Endothelial cell of umbilical vein (primary cell): ENCODE measurements at regions of chr19 and their contacts with region 1.

Region 1: DNA sequence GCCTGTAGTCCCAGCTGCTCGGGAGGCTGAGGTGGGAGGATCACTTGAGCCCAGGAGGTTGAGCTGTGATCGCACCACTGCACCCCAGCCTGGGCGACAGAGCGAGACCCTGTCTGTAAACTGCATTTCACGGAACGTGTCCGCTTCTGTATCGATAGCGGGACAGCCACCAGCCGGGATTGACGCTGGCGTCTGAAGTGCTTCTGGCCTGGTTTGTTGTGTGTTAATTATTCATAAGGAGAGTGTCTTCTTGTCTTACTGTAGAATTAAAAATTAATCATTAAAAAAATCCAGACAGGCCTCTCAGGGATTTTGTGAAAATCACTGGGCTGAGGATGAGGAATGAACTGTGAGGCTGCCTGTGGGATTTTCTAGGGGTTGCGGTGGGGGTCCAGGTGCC is 16.2 kb upstream of the MISP start:
- DNase-seq: no peak
- H3K4me3 ChIP-seq: no peak overlapping the region
- H3K27ac ChIP-seq: no peak overlapping the region
- H3K4me1 ChIP-seq: no peaks in the 10 kb centered on the region
- H3K27me3 ChIP-seq: no peaks in the 10 kb centered on the region
- CTCF ChIP-seq: no peak
- POLR2A ChIP-seq: no peak

Region 2: GRCh38 chr19:548841-549830 is 185.6 kb before region 1 on chr19:
- CTCF ChIA-PET with region 1: interaction called, 3 read pairs
- POLR2A ChIA-PET with region 1: no interaction called
- dilution Hi-C with region 1: no loop called
- intact Hi-C with region 1: loop called (anchors 1 kb)
- DNase-seq: no peak
- H3K4me3 ChIP-seq: no peak overlapping the region
- H3K27ac ChIP-seq: no peak overlapping the region
- H3K4me1 ChIP-seq: no peaks in the 10 kb centered on the region
- H3K27me3 ChIP-seq: no peaks in the 10 kb centered on the region
- CTCF ChIP-seq: no peak
- POLR2A ChIP-seq: no peak

Region 3: GRCh38 chr19:610801-611505 is 123.8 kb before region 1 on chr19:
- CTCF ChIA-PET with region 1: no interaction called
- POLR2A ChIA-PET with region 1: no interaction called
- dilution Hi-C with region 1: no loop called
- intact Hi-C with region 1: no loop called
- DNase-seq: no peak
- H3K4me3 ChIP-seq: no peak overlapping the region
- H3K27ac ChIP-seq: no peak overlapping the region
- H3K4me1 ChIP-seq: peaks cover 8% of the 10 kb centered on the region
- H3K27me3 ChIP-seq: no peaks in the 10 kb centered on the region
- CTCF ChIP-seq: no peak
- POLR2A ChIP-seq: no peak

Region 4: GRCh38 chr19:623974-624373 is 110.7 kb before region 1 on chr19:
- CTCF ChIA-PET with region 1: no interaction called
- POLR2A ChIA-PET with region 1: no interaction called
- dilution Hi-C with region 1: no loop called
- intact Hi-C with region 1: no loop called
- DNase-seq: no peak
- H3K4me3 ChIP-seq: no peak overlapping the region
- H3K27ac ChIP-seq: no peak overlapping the region
- H3K4me1 ChIP-seq: no peaks in the 10 kb centered on the region
- H3K27me3 ChIP-seq: no peaks in the 10 kb centered on the region
- CTCF ChIP-seq: no peak
- POLR2A ChIP-seq: no peak

Region 5: DNA sequence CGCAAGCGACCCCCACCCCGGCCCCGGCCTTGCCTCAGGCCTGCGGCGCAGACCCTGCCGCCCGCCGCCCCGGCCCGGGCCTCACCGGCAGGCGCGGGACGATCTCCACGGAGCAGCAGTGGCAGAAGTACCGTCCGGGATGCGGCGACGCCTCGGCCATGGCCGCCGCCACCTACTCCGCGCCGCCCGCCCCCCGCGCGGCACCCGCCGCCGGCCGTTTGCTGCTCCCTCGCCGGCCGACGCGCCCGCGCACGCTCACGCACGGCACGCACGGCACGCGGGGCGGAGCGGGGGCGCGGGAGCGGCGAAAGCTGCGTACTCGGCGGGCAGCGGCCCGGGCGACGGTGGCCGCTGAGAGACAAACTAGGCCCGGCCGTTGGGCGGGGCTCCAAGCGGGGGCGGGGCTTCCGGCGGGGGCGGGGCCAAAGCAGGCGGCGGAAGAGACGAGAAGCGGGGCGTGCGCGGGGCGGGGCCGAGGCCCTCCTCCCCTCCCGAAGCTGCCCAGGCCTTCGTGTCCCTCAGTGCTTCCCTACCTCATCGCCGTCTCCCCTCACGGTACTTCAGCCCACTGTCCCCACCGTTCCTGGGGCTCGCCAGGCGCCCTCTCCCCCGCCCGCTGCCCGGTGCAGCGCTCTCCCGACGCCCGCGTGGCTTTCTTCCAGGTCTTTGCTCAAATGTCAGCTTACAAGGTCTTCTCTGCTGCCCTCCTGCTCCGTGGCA is 71.6 kb before region 1 on chr19 and contains the start of gene RNF126:
- CTCF ChIA-PET with region 1: interaction called, 67 read pairs
- POLR2A ChIA-PET with region 1: interaction called, 4 read pairs
- dilution Hi-C with region 1: no loop called
- intact Hi-C with region 1: loop called (anchors 1 kb)
- DNase-seq: peak; percentile 89
- H3K4me3 ChIP-seq: peak within 1 kb of the TSS; percentile 73 to 89 (median 86)
- H3K27ac ChIP-seq: peak within 1 kb of the TSS; percentile 60
- H3K4me1 ChIP-seq: peaks cover 19% of the 10 kb centered on the region
- H3K27me3 ChIP-seq: no peaks in the 10 kb centered on the region
- CTCF ChIP-seq: no peak
- POLR2A ChIP-seq: peak; percentile 88
- total RNA-seq, gene RNF126: 58.4 and 61.3 TPM in 2 replicates

Region 6: GRCh38 chr19:680287-681028 is 54.3 kb before region 1 on chr19:
- CTCF ChIA-PET with region 1: interaction called, 20 read pairs
- POLR2A ChIA-PET with region 1: no interaction called
- dilution Hi-C with region 1: no loop called
- intact Hi-C with region 1: no loop called
- DNase-seq: peak; percentile 99
- H3K4me3 ChIP-seq: peak overlapping the region; percentile 31 to 55 (median 49)
- H3K27ac ChIP-seq: peak overlapping the region; percentile 77
- H3K4me1 ChIP-seq: peaks cover 16% of the 10 kb centered on the region
- H3K27me3 ChIP-seq: no peaks in the 10 kb centered on the region
- CTCF ChIP-seq: peak; percentile 33 to 52
- POLR2A ChIP-seq: no peak

Region 7: GRCh38 chr19:709965-710571 is 24.6 kb before region 1 on chr19:
- CTCF ChIA-PET with region 1: interaction called, 18 read pairs
- POLR2A ChIA-PET with region 1: no interaction called
- dilution Hi-C with region 1: no loop called
- intact Hi-C with region 1: loop called (anchors 2 kb)
- DNase-seq: no peak
- H3K4me3 ChIP-seq: peak overlapping the region in 2 of 3 experiments; percentile 23 to 43
- H3K27ac ChIP-seq: no peak overlapping the region
- H3K4me1 ChIP-seq: peaks cover 3% of the 10 kb centered on the region
- H3K27me3 ChIP-seq: no peaks in the 10 kb centered on the region
- CTCF ChIP-seq: no peak
- POLR2A ChIP-seq: no peak